ENCODE measurements at regions of chr3 and their contacts with region 1.

Region 1: GRCh38 chr3:192816351-192816750 is 89.0 kb upstream of the FGF12 start:
- DNase-seq: no peak
- H3K4me3 Mint-ChIP-seq: no peak overlapping the region
- H3K27ac Mint-ChIP-seq: no peak overlapping the region
- H3K4me1 Mint-ChIP-seq: peaks cover 44% of the 10 kb centered on the region
- H3K27me3 Mint-ChIP-seq: peaks cover 7% of the 10 kb centered on the region

Region 2: GRCh38 chr3:192621909-192622308 is 194.4 kb before region 1 on chr3:
- CTCF ChIA-PET with region 1: no interaction called
- intact Hi-C with region 1: no loop called
- DNase-seq: no peak
- H3K4me3 Mint-ChIP-seq: no peak overlapping the region
- H3K27ac Mint-ChIP-seq: no peak overlapping the region
- H3K4me1 Mint-ChIP-seq: no peaks in the 10 kb centered on the region
- H3K27me3 Mint-ChIP-seq: peaks cover 2% of the 10 kb centered on the region

Region 3: GRCh38 chr3:192831111-192831644 is 14.8 kb after region 1 on chr3:
- CTCF ChIA-PET with region 1: interaction called, 10 read pairs
- intact Hi-C with region 1: loop called (anchors 1 kb)
- DNase-seq: no peak
- H3K4me3 Mint-ChIP-seq: no peak overlapping the region
- H3K27ac Mint-ChIP-seq: no peak overlapping the region
- H3K4me1 Mint-ChIP-seq: peaks cover 26% of the 10 kb centered on the region
- H3K27me3 Mint-ChIP-seq: no peaks in the 10 kb centered on the region

Region 4: GRCh38 chr3:192892981-192893700 is 76.8 kb after region 1 on chr3:
- CTCF ChIA-PET with region 1: interaction called, 4 read pairs
- intact Hi-C with region 1: loop called (anchors 1 kb)
- DNase-seq: peak; percentile 86
- H3K4me3 Mint-ChIP-seq: peak overlapping the region; percentile 26
- H3K27ac Mint-ChIP-seq: peak overlapping the region; percentile 77
- H3K4me1 Mint-ChIP-seq: peaks cover 83% of the 10 kb centered on the region
- H3K27me3 Mint-ChIP-seq: peaks cover 26% of the 10 kb centered on the region

Region 5: DNA sequence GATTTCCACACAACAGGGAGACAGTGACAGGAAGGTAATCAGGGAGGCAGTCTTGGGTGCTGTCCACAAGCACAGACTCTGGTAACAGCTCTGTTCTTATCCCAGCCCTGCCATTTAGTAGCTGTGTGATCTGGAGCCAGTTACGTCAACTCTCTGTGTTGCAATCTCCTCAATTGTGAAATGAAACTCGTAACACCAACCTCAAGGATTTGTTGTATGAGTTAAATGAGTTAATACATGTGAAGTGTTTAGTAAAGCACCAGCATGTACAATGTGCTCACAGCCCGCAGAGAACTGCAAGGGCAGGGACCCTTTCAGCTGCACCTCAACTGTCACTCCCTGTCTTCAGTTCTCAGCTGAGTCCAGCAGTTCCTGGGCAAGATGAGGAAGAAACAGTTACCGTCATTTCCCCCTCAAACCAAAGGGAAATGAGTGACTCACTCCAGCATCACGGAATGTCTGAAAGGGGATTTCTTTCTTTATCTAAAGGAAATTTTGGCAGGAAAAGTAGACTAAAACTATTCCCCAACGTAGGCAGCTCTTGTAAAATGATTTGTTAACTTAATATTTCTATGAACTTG is 141.2 kb after region 1 on chr3:
- CTCF ChIA-PET with region 1: interaction called, 4 read pairs
- intact Hi-C with region 1: loop called (anchors 1 kb)
- DNase-seq: peak; percentile 14
- H3K4me3 Mint-ChIP-seq: no peak overlapping the region
- H3K27ac Mint-ChIP-seq: no peak overlapping the region
- H3K4me1 Mint-ChIP-seq: peaks cover 23% of the 10 kb centered on the region
- H3K27me3 Mint-ChIP-seq: no peaks in the 10 kb centered on the region

Region 6: GRCh38 chr3:193465992-193466608 is 649.7 kb after region 1 on chr3:
- CTCF ChIA-PET with region 1: no interaction called
- intact Hi-C with region 1: loop called (anchors 2 kb)
- DNase-seq: no peak
- H3K4me3 Mint-ChIP-seq: no peak overlapping the region
- H3K27ac Mint-ChIP-seq: no peak overlapping the region
- H3K4me1 Mint-ChIP-seq: no peaks in the 10 kb centered on the region
- H3K27me3 Mint-ChIP-seq: no peaks in the 10 kb centered on the region

Measured in activated naive CD4-positive, alpha-beta T cell treated with anti-CD3 and anti-CD28 coated beads for 36 hours (primary cell).